IMR-90 (cell line): ENCODE measurements at regions of chr16 and their contacts with region 1.

Region 1: GRCh38 chr16:72124761-72125634 is 31.4 kb downstream of the DHX38 start:
- DNase-seq: peak; percentile 69
- ATAC-seq: peak; percentile 97
- H3K4me3 ChIP-seq: no peak overlapping the region
- H3K27ac ChIP-seq: no peak overlapping the region
- H3K4me1 ChIP-seq: no peaks in the 10 kb centered on the region
- H3K27me3 ChIP-seq: peaks cover 4% of the 10 kb centered on the region; the same call in 1 of the 2 replicates
- CTCF ChIP-seq: peak; percentile 80
- POLR2A ChIP-seq: no peak
- RAD21 ChIP-seq: peak; percentile 84

Region 2: DNA sequence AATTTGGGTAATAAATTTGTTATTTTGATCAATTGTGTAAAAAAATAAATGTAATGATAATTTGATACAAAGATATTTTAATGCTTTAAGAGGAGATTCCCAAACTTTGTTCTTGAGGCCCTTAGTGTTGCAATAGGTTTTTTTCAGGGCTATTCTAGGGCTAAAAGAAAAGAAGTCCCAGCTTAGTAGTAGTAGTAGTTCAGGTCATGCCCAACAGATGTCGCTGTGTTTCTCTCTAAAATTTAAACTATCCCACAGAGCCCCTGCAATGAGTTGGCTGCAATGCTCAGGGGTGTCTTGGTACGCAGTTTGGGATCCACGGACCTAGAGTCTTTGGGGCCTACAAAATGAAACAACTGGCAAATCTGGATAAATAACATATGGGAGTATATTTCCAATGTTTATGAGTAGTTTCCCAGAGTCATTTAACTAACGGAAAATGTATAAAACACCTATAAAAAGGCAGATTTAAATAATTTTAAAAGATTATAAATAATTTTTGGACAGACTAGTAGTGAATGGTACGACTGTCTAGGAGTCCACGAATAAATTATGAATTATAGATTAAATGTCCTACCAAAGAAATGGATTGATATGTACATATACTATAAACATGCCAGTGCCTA is 275.4 kb after region 1 on chr16:
- CTCF ChIA-PET with region 1: no interaction called
- POLR2A ChIA-PET with region 1: no interaction called
- dilution Hi-C with region 1: no loop called
- in situ Hi-C with region 1: no loop called
- intact Hi-C with region 1: loop called (anchors 10 kb)
- DNase-seq: peak; percentile 62
- ATAC-seq: peak; percentile 91
- H3K4me3 ChIP-seq: no peak overlapping the region
- H3K27ac ChIP-seq: no peak overlapping the region
- H3K4me1 ChIP-seq: no peaks in the 10 kb centered on the region; the same call in 1 of the 2 replicates
- H3K27me3 ChIP-seq: no peaks in the 10 kb centered on the region
- CTCF ChIP-seq: peak; percentile 66
- POLR2A ChIP-seq: no peak
- RAD21 ChIP-seq: peak; percentile 54

Region 3: GRCh38 chr16:72664509-72665225 is 539.7 kb after region 1 on chr16:
- CTCF ChIA-PET with region 1: no interaction called
- POLR2A ChIA-PET with region 1: no interaction called
- dilution Hi-C with region 1: no loop called
- in situ Hi-C with region 1: no loop called
- intact Hi-C with region 1: loop called (anchors 10 kb)
- DNase-seq: peak; percentile 99
- ATAC-seq: peak; percentile 100
- H3K4me3 ChIP-seq: peak overlapping the region; percentile 65
- H3K27ac ChIP-seq: peak overlapping the region; percentile 26; the same call in 1 of the 2 replicates
- H3K4me1 ChIP-seq: no peaks in the 10 kb centered on the region
- H3K27me3 ChIP-seq: no peaks in the 10 kb centered on the region
- CTCF ChIP-seq: no peak
- POLR2A ChIP-seq: peak; percentile 67; the same call in 1 of the 2 replicates
- RAD21 ChIP-seq: no peak

Region 4: DNA sequence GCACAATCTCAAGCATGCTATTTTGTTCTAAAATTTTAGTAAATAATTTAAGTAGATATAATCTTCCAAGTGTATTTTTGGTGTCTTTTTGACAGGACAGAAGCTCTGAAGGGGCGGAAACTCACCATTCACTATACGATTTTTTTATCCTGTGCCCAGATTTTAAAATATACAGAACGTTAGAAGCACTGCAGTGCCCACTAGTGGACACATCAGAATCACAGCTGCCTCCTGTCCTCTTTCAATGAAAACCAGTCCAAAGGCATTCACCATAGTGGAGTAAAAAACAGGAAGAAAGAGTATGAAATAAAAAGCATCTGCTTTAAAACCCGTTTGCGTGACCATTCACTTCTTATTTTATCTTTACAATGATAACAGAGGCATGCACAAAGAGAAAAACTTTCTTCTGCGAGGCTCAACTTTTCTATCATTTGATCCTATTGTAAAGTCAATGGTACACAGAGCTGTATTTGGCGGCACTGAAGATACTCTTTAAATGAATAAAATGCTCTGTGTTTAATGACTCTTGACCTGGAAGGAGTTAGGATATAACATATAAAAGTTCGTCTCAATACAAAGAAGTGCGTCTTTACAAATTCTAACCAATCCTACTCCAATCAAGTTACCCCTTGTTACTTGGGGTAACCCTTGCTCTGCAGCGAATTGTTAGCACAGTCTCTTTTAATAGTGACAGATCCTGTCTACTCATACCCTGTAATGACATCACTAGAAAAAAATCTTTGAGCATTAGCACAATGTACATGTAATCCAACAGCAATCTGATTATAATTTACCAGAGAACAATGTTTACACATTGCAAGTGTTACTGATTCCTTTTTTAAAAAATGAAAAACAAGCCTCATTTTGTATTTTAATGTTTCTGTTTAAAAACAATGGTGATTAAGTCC is 1831.8 kb after region 1 on chr16:
- CTCF ChIA-PET with region 1: no interaction called
- POLR2A ChIA-PET with region 1: no interaction called
- dilution Hi-C with region 1: no loop called
- in situ Hi-C with region 1: no loop called
- intact Hi-C with region 1: loop called (anchors 1 kb)
- DNase-seq: peak; percentile 64
- ATAC-seq: peak; percentile 92
- H3K4me3 ChIP-seq: no peak overlapping the region
- H3K27ac ChIP-seq: no peak overlapping the region
- H3K4me1 ChIP-seq: no peaks in the 10 kb centered on the region
- H3K27me3 ChIP-seq: no peaks in the 10 kb centered on the region
- CTCF ChIP-seq: peak; percentile 74
- POLR2A ChIP-seq: no peak
- RAD21 ChIP-seq: peak; percentile 73